ENCODE measurements at regions of chr3 and their contacts with region 1.

Region 1: DNA sequence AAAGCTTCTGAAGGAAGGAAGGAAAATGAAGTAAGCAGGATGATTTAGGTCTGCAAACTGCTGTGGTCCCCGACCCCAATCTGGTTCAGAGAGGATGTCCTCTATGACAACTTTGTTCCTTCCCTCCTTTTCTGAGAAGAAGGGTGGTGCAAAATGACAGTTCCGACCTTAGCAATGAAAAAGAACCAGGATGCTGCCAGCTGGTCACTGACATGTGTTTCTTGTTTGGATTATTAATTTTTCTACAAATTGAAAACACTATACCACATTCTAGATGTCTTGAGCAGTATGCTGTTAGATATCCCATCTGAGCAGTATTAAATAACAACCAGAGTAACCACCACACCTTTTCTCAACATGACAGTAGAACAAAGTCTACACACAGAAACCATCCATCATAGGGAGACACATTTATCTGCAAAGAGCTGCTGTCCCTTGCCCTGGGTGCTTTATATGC is 27.5 kb downstream of the CDCP1 start:
- DNase-seq: no peak
- ATAC-seq: no peak
- H3K4me3 ChIP-seq: no peak overlapping the region
- H3K27ac ChIP-seq: no peak overlapping the region
- H3K4me1 ChIP-seq: peaks cover 3 to 41% of the 10 kb centered on the region in 2 experiments; a peak in 4 of 5 replicates
- H3K27me3 ChIP-seq: no peaks in the 10 kb centered on the region
- CTCF ChIP-seq: no peak
- EP300 ChIP-seq: no peak
- POLR2A ChIP-seq: no peak
- RAD21 ChIP-seq: no peak

Region 2: GRCh38 chr3:45105855-45106671 is 12.6 kb before region 1 on chr3:
- CTCF ChIA-PET with region 1: no interaction called
- POLR2A ChIA-PET with region 1: interaction called, 12 read pairs
- in situ Hi-C with region 1: no loop called
- intact Hi-C with region 1: no loop called
- DNase-seq: peak; percentile 52 to 75 (median 60)
- ATAC-seq: peak; percentile 55
- H3K4me3 ChIP-seq: no peak overlapping the region
- H3K27ac ChIP-seq: peak overlapping the region; percentile 84
- H3K4me1 ChIP-seq: peaks cover 30 to 78% of the 10 kb centered on the region in 2 experiments
- H3K27me3 ChIP-seq: no peaks in the 10 kb centered on the region
- CTCF ChIP-seq: no peak
- EP300 ChIP-seq: peak; percentile 79
- POLR2A ChIP-seq: no peak
- RAD21 ChIP-seq: peak; percentile 27 to 33; a peak in 2 of 4 replicates

Region 3: DNA sequence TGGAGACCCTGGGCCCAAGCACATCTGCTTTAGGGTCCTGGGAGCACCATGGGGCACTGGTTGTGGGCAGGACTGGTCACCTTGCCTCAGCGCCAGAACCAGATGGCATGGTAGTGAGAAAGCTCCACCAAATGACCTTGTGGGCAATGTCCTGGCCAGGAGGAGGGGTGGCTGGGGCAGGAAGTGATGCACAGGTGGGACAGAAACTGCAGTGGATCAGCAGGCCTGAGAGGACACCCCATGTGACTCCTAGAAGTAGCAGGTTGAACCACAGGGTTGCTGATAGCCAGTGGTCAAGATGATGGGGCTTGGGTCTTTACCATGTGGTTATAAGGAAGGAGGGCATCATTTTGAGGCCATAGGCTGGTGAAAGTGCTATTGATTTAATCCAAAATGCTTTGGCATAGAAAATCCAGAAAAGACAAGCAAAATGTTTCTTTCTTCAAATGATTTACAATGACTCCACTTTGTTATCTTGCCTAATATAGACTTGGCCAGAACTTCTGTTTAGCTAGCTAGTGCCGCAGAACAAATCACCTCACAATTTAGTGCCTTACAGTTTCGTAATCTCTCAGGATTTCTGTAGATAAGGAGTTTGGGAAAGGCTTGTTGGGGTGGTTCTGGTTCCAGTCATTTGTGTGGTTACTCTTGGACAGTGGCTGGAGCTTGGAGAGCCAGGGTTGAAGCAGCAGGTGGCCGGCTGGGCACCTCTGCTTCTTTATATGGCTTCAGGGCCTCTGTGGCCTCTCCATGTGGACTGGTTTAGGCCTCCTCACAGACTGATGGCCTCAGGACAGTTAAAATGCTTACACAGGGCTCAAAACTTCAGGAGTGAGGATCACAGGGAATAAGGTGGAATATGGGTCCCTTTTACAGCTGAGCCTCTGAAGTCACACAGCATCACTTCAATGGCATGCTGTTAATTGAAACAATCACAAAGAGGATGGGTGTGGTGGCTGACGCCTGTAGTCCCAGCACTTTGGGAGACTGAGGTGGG is 79.9 kb after region 1 on chr3:
- CTCF ChIA-PET with region 1: no interaction called
- POLR2A ChIA-PET with region 1: no interaction called
- in situ Hi-C with region 1: no loop called
- intact Hi-C with region 1: no loop called
- DNase-seq: no peak
- ATAC-seq: no peak
- H3K4me3 ChIP-seq: no peak overlapping the region
- H3K27ac ChIP-seq: no peak overlapping the region
- H3K4me1 ChIP-seq: no peaks in the 10 kb centered on the region; a peak in 1 of 5 replicates
- H3K27me3 ChIP-seq: peaks cover 0 to 7% of the 10 kb centered on the region in 2 experiments; a peak in 4 of 5 replicates
- CTCF ChIP-seq: no peak
- EP300 ChIP-seq: no peak
- POLR2A ChIP-seq: no peak
- RAD21 ChIP-seq: no peak

Measured in K562 (cell line).